ENCODE measurements at regions of chr7 and their contacts with region 1.

Region 1: GRCh38 chr7:4973728-4974198 is 14.8 kb upstream of the MMD2 start:
- DNase-seq: peak; percentile 95
- H3K4me3 Mint-ChIP-seq: peak overlapping the region; percentile 98
- H3K27ac Mint-ChIP-seq: peak overlapping the region; percentile 98
- H3K4me1 Mint-ChIP-seq: peaks cover 28% of the 10 kb centered on the region
- H3K27me3 Mint-ChIP-seq: no peaks in the 10 kb centered on the region

Region 2: DNA sequence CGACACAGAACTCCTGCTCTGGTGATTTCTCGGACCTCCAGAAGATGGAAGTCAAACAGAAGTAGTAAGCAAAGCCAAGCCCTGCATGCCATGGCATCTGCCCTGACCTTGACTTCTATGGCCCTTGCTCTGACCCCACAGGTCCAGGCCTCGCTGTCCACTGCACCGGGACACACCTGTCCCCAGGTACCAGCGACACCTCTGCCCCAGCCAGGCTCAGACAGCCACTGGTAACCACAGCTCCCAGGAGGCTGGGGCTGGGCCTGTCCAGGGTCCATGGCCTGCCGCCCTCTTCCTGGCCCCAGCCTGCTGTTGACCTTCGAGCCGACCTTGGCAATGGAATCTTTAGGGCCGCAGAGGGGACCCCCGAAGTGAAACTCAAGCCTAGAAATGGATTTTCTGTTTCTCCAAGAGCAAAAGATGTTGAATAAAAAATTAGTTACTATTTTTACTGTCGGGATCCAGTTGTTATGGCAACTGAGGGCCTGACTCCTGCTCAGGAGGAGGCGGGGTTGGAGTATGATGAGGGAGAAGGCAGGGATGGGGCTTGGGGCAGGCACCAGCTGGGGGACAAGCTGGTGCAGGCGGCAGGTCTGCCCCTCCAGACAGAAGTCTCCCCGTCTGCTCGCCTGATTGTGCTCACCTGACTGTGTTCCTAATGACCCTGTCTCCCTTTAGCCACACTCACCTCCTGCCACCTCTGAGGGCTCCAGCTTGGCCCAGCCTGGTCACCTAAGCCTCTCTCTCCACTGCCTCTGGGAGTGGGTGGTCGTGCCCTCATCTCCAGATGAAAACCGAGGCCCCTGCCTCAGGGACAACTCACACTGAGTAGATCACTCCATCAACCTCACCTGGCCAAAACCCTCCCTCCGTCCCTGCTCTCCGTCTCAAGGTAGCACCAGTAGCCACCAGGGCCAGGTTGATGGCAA is 10.6 kb before region 1 on chr7:
- CTCF ChIA-PET with region 1: interaction called, 14 read pairs
- POLR2A ChIA-PET with region 1: no interaction called
- DNase-seq: no peak
- H3K4me3 Mint-ChIP-seq: no peak overlapping the region
- H3K27ac Mint-ChIP-seq: no peak overlapping the region
- H3K4me1 Mint-ChIP-seq: peaks cover 5% of the 10 kb centered on the region
- H3K27me3 Mint-ChIP-seq: peaks cover 6% of the 10 kb centered on the region

Region 3: GRCh38 chr7:4996696-4997222 is 23.0 kb after region 1 on chr7:
- CTCF ChIA-PET with region 1: interaction called, 11 read pairs
- POLR2A ChIA-PET with region 1: no interaction called
- DNase-seq: no peak
- H3K4me3 Mint-ChIP-seq: no peak overlapping the region
- H3K27ac Mint-ChIP-seq: no peak overlapping the region
- H3K4me1 Mint-ChIP-seq: peaks cover 3% of the 10 kb centered on the region
- H3K27me3 Mint-ChIP-seq: no peaks in the 10 kb centered on the region

Region 4: GRCh38 chr7:5086256-5086655 is 112.5 kb after region 1 on chr7:
- CTCF ChIA-PET with region 1: interaction called, 34 read pairs
- POLR2A ChIA-PET with region 1: interaction called, 4 read pairs
- DNase-seq: no peak
- H3K4me3 Mint-ChIP-seq: no peak overlapping the region
- H3K27ac Mint-ChIP-seq: no peak overlapping the region
- H3K4me1 Mint-ChIP-seq: peaks cover 10% of the 10 kb centered on the region
- H3K27me3 Mint-ChIP-seq: peaks cover 2% of the 10 kb centered on the region

Measured in activated CD4-positive, alpha-beta T cell treated with anti-CD3 and anti-CD28 coated beads, Interleukin-2, amount 10 ng/mL, durations not matched to agents 7 days and 5 days (primary cell).